Mammary epithelial cell (primary cell): ENCODE measurements at regions of chr3 and their contacts with region 1.

Region 1: DNA sequence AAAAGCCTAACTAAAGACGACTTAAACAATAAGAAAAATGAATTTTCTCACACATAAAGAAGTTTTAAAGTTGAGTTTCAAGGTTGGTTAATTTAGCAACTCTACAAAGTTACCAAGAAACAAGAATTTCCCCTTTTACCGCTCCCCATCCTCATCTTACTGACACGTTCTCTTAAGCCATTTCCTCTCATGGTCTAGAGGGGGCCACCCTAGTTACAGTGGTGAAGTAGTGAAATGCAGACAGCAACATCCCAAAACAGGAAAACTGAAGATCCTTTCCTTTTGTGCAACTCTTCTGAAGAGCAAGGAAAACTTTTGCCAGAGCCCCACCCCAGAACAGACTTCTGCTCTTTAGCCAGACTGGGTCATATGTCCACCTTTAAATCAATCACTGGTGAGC is 17.3 kb upstream of the SOX14 start:
- DNase-seq: no peak
- H3K4me3 ChIP-seq: no peak overlapping the region
- H3K27ac ChIP-seq: no peak overlapping the region
- H3K4me1 ChIP-seq: no peaks in the 10 kb centered on the region
- H3K27me3 ChIP-seq: no peaks in the 10 kb centered on the region
- CTCF ChIP-seq: no peak

Region 2: GRCh38 chr3:137854533-137855280 is 107.9 kb after region 1 on chr3:
- CTCF ChIA-PET with region 1: no interaction called
- dilution Hi-C with region 1: loop called (anchors 5 kb)
- in situ Hi-C with region 1: no loop called
- intact Hi-C with region 1: no loop called
- DNase-seq: no peak
- H3K4me3 ChIP-seq: no peak overlapping the region
- H3K27ac ChIP-seq: no peak overlapping the region
- H3K4me1 ChIP-seq: no peaks in the 10 kb centered on the region
- H3K27me3 ChIP-seq: peaks cover 2% of the 10 kb centered on the region
- CTCF ChIP-seq: no peak